MCF 10A (cell line): ENCODE measurements at regions of chr1 and their contacts with region 1.

Region 1: GRCh38 chr1:241688940-241689368 is 36.9 kb downstream of the WDR64 start:
- DNase-seq: peak; percentile 100
- H3K4me3 Mint-ChIP-seq: peak overlapping the region; percentile 6
- H3K27ac Mint-ChIP-seq: peak overlapping the region; percentile 79
- H3K4me1 Mint-ChIP-seq: peaks cover 23% of the 10 kb centered on the region
- H3K27me3 Mint-ChIP-seq: no peaks in the 10 kb centered on the region
- CTCF ChIP-seq: no peak

Region 2: DNA sequence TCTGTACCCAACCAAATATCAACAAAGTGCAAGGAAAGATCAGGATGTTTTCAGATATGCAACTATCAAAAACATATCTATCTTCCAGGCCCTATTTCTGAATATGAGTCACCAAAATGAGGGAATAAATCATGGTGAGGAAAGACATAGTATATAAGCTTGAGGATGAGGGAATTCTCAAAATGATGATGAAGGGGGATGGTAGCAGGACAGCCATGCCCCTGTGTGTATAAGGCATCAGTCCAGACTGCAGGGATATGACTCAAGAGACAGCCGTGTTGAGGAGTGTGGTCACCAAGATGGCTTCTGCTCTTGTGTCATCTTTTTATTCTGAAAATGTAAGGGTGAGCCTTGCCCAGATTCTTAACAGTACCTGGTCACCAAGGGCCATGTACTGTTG is 41.3 kb before region 1 on chr1:
- CTCF ChIA-PET with region 1: interaction called, 3 read pairs
- POLR2A ChIA-PET with region 1: interaction called, 151 read pairs
- intact Hi-C with region 1: no loop called
- DNase-seq: peak; percentile 76
- H3K4me3 Mint-ChIP-seq: no peak overlapping the region
- H3K27ac Mint-ChIP-seq: no peak overlapping the region
- H3K4me1 Mint-ChIP-seq: peaks cover 11% of the 10 kb centered on the region
- H3K27me3 Mint-ChIP-seq: no peaks in the 10 kb centered on the region
- CTCF ChIP-seq: no peak

Region 3: DNA sequence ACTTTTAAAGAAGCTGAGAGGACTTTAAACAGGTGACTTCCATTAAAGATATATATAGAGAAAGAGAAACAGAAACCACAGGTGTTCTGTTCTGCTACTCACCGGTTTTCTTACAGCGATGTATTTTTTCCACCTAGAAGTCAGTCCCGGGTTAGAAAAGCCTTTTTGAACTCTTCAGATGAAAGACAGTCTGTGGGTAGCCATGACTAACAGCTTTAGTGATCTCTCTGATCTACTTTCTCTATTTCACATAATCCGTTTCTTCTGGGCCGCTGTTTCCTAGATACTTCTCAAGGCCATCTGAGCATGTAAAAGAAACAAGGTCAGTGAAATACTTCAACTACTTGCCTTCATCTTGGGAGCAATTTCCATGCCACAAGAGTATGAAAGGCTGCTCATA is 11.8 kb before region 1 on chr1:
- CTCF ChIA-PET with region 1: interaction called, 4 read pairs
- POLR2A ChIA-PET with region 1: interaction called, 27 read pairs
- intact Hi-C with region 1: no loop called
- DNase-seq: no peak
- H3K4me3 Mint-ChIP-seq: no peak overlapping the region
- H3K27ac Mint-ChIP-seq: no peak overlapping the region
- H3K4me1 Mint-ChIP-seq: no peaks in the 10 kb centered on the region
- H3K27me3 Mint-ChIP-seq: no peaks in the 10 kb centered on the region
- CTCF ChIP-seq: no peak

Region 4: DNA sequence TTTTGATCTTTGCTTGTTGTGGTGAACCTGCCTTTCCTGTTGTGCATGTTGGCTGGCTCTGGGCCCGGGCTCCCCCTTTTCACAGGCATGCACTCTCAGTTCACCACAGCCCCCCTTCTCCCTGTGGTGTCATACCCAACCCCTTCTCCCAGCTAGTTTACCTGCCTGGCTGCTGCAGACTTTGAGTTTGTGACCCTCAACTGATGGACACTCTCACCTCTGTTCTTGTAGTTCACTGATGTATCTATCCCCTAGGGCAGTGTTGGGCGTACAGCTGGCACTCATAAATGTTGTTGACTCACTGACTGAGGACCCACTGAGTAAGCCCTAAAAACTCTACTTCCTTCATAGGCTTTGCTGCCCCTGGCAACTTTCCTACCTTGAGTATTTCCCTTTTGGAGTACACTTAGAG is 18.0 kb after region 1 on chr1:
- CTCF ChIA-PET with region 1: interaction called, 6 read pairs
- POLR2A ChIA-PET with region 1: interaction called, 50 read pairs
- intact Hi-C with region 1: loop called (anchors 2 kb)
- DNase-seq: peak; percentile 97
- H3K4me3 Mint-ChIP-seq: peak overlapping the region; percentile 12
- H3K27ac Mint-ChIP-seq: peak overlapping the region; percentile 85
- H3K4me1 Mint-ChIP-seq: peaks cover 37% of the 10 kb centered on the region
- H3K27me3 Mint-ChIP-seq: no peaks in the 10 kb centered on the region
- CTCF ChIP-seq: no peak

Region 5: DNA sequence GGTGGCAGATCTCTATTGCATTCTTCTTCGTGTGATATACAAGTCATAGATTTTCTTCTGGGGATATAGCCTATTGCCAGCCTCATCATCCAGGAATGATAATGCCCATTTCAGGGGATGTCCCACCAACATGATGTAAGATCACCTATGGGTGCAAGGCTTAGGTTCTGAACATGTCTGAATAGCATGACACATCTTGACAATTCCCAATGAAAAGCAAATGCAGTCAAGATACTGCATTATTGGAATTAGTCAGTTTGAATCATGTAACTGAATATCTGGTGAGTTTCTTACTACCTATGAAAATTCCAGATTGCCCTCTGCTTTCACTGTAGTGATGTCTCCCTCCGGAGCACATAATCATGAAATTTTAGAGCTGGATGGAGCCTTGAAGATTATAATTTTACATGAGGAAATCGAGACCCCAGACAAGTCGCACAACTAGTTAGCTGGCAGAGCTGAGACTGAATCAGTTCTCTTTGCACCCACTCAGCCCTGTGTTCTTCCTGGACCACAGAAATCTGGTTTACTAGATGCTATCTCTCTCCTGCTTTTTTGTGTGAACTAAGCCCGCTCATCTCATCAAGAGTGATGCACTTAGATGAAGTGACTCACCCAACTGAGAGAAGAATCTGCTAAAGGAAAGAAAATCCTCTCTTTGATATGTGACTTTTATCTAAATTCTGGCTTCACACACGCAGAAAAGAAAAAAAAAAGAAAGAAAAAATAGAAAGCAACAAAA is 28.1 kb after region 1 on chr1:
- CTCF ChIA-PET with region 1: interaction called, 6 read pairs
- POLR2A ChIA-PET with region 1: interaction called, 34 read pairs
- intact Hi-C with region 1: no loop called
- DNase-seq: no peak
- H3K4me3 Mint-ChIP-seq: no peak overlapping the region
- H3K27ac Mint-ChIP-seq: peak overlapping the region; percentile 93
- H3K4me1 Mint-ChIP-seq: peaks cover 48% of the 10 kb centered on the region
- H3K27me3 Mint-ChIP-seq: no peaks in the 10 kb centered on the region
- CTCF ChIP-seq: no peak

Region 6: GRCh38 chr1:241749901-241750695 is 61.1 kb after region 1 on chr1:
- CTCF ChIA-PET with region 1: interaction called, 9 read pairs
- POLR2A ChIA-PET with region 1: interaction called, 20 read pairs
- intact Hi-C with region 1: no loop called
- DNase-seq: no peak
- H3K4me3 Mint-ChIP-seq: peak overlapping the region; percentile 72
- H3K27ac Mint-ChIP-seq: peak overlapping the region; percentile 81
- H3K4me1 Mint-ChIP-seq: peaks cover 16% of the 10 kb centered on the region
- H3K27me3 Mint-ChIP-seq: no peaks in the 10 kb centered on the region
- CTCF ChIP-seq: no peak

Region 7: DNA sequence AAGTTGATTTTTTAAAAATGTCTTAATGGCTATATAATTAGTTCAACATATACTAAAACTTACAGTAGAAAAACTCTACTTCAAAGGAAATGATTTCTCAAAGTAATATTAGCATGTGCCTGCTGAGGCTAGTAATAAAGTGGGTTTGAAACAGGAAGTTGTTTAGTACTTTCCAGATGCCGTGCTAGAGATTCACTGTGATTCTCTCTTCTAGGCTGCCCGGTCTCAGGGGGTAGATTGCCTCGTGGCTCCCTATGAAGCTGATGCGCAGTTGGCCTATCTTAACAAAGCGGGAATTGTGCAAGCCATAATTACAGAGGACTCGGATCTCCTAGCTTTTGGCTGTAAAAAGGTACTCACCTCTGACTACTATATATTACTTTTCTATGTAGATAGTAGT is 168.2 kb after region 1 on chr1:
- CTCF ChIA-PET with region 1: no interaction called
- POLR2A ChIA-PET with region 1: no interaction called
- intact Hi-C with region 1: no loop called
- DNase-seq: no peak
- H3K4me3 Mint-ChIP-seq: no peak overlapping the region
- H3K27ac Mint-ChIP-seq: no peak overlapping the region
- H3K4me1 Mint-ChIP-seq: no peaks in the 10 kb centered on the region
- H3K27me3 Mint-ChIP-seq: no peaks in the 10 kb centered on the region
- CTCF ChIP-seq: no peak